Breast epithelium (tissue), 4 donors: ENCODE measurements at regions of chr22 and their contacts with region 1.

Region 1: DNA sequence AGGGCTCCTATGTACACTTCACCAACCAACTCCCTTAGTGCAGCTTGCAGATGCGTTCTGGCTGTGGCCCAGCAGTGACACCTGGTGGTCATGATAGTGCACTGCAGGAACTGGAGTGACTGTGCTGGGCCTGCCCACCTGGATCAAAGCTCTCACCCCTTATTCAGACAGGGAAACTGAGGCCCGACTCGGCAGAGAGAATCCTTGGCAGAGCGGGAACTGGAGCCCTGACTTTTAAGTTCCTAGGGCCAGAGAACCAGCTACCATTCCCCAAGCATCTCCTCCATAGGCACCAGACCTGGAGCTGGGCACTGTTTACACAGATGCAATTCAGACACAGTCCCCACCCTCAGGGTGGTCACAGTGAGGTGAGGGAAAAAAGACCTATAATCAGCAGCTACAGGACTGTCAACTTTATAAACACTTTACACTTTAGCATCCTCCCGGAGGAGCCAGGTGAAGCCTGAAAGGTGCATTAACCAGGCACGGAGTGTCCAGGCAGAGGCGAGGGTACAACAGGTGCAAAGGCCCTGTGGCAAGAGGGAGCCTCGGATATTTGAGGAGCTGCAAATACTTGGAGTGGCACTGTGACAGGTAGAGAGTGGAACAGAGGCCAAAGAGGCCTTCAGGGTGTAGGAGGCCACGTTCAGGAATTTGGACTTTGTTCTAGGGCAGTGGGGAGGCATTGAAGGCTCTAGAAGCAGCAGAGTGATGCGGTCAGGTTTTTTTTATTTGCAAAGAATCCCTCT is 22.0 kb downstream of the RHBDD3 start:
- DNase-seq: peak; percentile 51 to 85
- H3K4me3 ChIP-seq: no peak overlapping the region
- H3K27ac ChIP-seq: no peak overlapping the region
- H3K4me1 ChIP-seq: no peaks in the 10 kb centered on the region
- H3K27me3 ChIP-seq: no peaks in the 10 kb centered on the region
- CTCF ChIP-seq: peak; percentile 88 to 94 (median 92)
- POLR2A ChIP-seq: no peak

Region 2: GRCh38 chr22:27866132-27867086 is 1379.4 kb before region 1 on chr22:
- intact Hi-C with region 1: loop called (anchors 5 kb)
- DNase-seq: no peak
- H3K4me3 ChIP-seq: no peak overlapping the region
- H3K27ac ChIP-seq: peak overlapping the region; percentile 60 to 61
- H3K4me1 ChIP-seq: peaks cover 0 to 11% of the 10 kb centered on the region in 2 donors
- H3K27me3 ChIP-seq: no peaks in the 10 kb centered on the region
- CTCF ChIP-seq: no peak
- POLR2A ChIP-seq: no peak

Region 3: GRCh38 chr22:29369460-29369859 is 123.6 kb after region 1 on chr22:
- intact Hi-C with region 1: no loop called
- DNase-seq: no peak
- H3K4me3 ChIP-seq: no peak overlapping the region
- H3K27ac ChIP-seq: peak overlapping the region in 1 of 2 donors; percentile 22
- H3K4me1 ChIP-seq: peaks cover 0 to 4% of the 10 kb centered on the region in 2 donors
- H3K27me3 ChIP-seq: no peaks in the 10 kb centered on the region
- CTCF ChIP-seq: no peak
- POLR2A ChIP-seq: no peak